GM12878 (cell line): ENCODE measurements at regions of chr1 and their contacts with region 1.

Region 1: GRCh38 chr1:42328047-42328625 is 6.9 kb downstream of the FOXJ3 start:
- DNase-seq: no peak
- ATAC-seq: peak; percentile 59
- H3K4me3 ChIP-seq: no peak overlapping the region
- H3K27ac ChIP-seq: no peak overlapping the region
- H3K4me1 ChIP-seq: no peaks in the 10 kb centered on the region
- H3K27me3 ChIP-seq: no peaks in the 10 kb centered on the region
- CTCF ChIP-seq: no peak
- EP300 ChIP-seq: no peak
- POLR2A ChIP-seq: no peak
- RAD21 ChIP-seq: no peak

Region 2: GRCh38 chr1:41902125-41902524 is 426.0 kb before region 1 on chr1:
- CTCF ChIA-PET with region 1: no interaction called
- POLR2A ChIA-PET with region 1: no interaction called
- RAD21 ChIA-PET with region 1: no interaction called
- SMC1A ChIA-PET with region 1: no interaction called
- in situ Hi-C with region 1: no loop called
- intact Hi-C with region 1: no loop called
- DNase-seq: no peak
- ATAC-seq: no peak
- H3K4me3 ChIP-seq: no peak overlapping the region
- H3K27ac ChIP-seq: no peak overlapping the region
- H3K4me1 ChIP-seq: peaks cover 17% of the 10 kb centered on the region
- H3K27me3 ChIP-seq: no peaks in the 10 kb centered on the region
- CTCF ChIP-seq: no peak
- EP300 ChIP-seq: no peak
- POLR2A ChIP-seq: no peak
- RAD21 ChIP-seq: no peak

Region 3: DNA sequence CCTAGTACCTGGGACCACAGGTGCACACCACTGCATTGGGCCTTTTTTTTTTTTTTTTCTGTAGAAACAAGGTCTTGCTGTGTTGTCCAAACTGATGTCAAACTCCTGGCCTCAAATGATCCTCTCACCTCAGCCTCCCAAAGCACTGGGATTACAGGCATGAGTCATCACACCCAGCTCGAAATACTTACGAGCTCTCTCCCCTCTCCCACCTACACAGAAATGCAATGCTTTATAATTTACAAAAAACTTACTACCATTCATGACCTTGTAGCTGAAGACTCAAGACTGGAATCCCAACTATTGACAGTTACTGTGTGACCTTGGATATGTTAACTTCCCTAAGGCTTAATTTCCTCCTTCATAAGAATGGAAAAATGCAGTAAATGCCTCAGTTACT is 11.8 kb before region 1 on chr1:
- CTCF ChIA-PET with region 1: interaction called, 10 read pairs
- POLR2A ChIA-PET with region 1: interaction called, 3 read pairs
- RAD21 ChIA-PET with region 1: interaction called, 4 read pairs
- SMC1A ChIA-PET with region 1: interaction called, 8 read pairs
- in situ Hi-C with region 1: no loop called
- intact Hi-C with region 1: no loop called
- DNase-seq: no peak
- ATAC-seq: no peak
- H3K4me3 ChIP-seq: no peak overlapping the region
- H3K27ac ChIP-seq: no peak overlapping the region
- H3K4me1 ChIP-seq: peaks cover 13% of the 10 kb centered on the region
- H3K27me3 ChIP-seq: no peaks in the 10 kb centered on the region
- CTCF ChIP-seq: no peak
- EP300 ChIP-seq: no peak
- POLR2A ChIP-seq: no peak
- RAD21 ChIP-seq: no peak

Region 4: DNA sequence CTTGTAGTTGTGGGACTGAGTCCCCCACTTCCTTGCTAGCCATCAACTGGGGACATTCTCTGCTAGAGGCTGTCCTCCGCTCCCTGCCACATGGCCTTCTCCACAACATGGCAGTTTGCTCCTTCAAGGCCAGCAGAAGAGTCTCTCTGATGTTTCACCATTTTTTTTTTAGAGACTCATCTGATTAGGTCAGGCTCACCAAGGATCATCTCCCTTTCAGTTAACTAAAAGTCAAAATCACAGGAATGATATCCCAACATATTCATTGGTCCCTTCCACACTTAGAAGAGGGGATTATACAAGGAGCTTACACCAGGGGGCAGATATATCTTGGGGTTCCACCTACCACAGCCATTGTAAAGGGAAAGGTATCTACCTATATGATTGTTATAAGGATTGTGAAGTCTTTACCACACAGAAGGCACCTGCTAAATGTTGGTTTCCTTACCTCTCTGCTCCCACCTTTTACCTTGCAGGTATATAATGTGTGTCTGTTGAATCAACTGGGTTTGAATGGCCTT is 75.8 kb after region 1 on chr1:
- CTCF ChIA-PET with region 1: no interaction called
- POLR2A ChIA-PET with region 1: no interaction called
- RAD21 ChIA-PET with region 1: no interaction called
- SMC1A ChIA-PET with region 1: no interaction called
- in situ Hi-C with region 1: no loop called
- intact Hi-C with region 1: no loop called
- DNase-seq: no peak
- ATAC-seq: no peak
- H3K4me3 ChIP-seq: no peak overlapping the region
- H3K27ac ChIP-seq: no peak overlapping the region
- H3K4me1 ChIP-seq: no peaks in the 10 kb centered on the region
- H3K27me3 ChIP-seq: no peaks in the 10 kb centered on the region; a peak in 1 of 4 replicates
- CTCF ChIP-seq: peak in 2 of 3 experiments; percentile 1 to 18; a peak in 1 of 6 replicates
- EP300 ChIP-seq: no peak
- POLR2A ChIP-seq: no peak
- RAD21 ChIP-seq: no peak